HepG2 (cell line): ENCODE measurements at regions of chr18 and their contacts with region 1.

Region 1: GRCh38 chr18:1585879-1586488 is 681.3 kb downstream of the ADCYAP1 start:
- DNase-seq: peak; percentile 20
- ATAC-seq: peak; percentile 68
- H3K4me3 ChIP-seq: no peak overlapping the region
- H3K27ac ChIP-seq: no peak overlapping the region
- H3K4me1 ChIP-seq: no peaks in the 10 kb centered on the region
- H3K27me3 ChIP-seq: no peaks in the 10 kb centered on the region
- CTCF ChIP-seq: peak; percentile 61
- EP300 ChIP-seq: no peak
- POLR2A ChIP-seq: no peak
- RAD21 ChIP-seq: no peak

Region 2: GRCh38 chr18:1526991-1527390 is 59.0 kb before region 1 on chr18:
- CTCF ChIA-PET with region 1: no interaction called
- POLR2A ChIA-PET with region 1: no interaction called
- in situ Hi-C with region 1: no loop called
- intact Hi-C with region 1: no loop called
- DNase-seq: no peak
- ATAC-seq: no peak
- H3K4me3 ChIP-seq: no peak overlapping the region
- H3K27ac ChIP-seq: no peak overlapping the region
- H3K4me1 ChIP-seq: no peaks in the 10 kb centered on the region
- H3K27me3 ChIP-seq: no peaks in the 10 kb centered on the region
- CTCF ChIP-seq: no peak
- EP300 ChIP-seq: no peak
- POLR2A ChIP-seq: no peak
- RAD21 ChIP-seq: no peak

Region 3: DNA sequence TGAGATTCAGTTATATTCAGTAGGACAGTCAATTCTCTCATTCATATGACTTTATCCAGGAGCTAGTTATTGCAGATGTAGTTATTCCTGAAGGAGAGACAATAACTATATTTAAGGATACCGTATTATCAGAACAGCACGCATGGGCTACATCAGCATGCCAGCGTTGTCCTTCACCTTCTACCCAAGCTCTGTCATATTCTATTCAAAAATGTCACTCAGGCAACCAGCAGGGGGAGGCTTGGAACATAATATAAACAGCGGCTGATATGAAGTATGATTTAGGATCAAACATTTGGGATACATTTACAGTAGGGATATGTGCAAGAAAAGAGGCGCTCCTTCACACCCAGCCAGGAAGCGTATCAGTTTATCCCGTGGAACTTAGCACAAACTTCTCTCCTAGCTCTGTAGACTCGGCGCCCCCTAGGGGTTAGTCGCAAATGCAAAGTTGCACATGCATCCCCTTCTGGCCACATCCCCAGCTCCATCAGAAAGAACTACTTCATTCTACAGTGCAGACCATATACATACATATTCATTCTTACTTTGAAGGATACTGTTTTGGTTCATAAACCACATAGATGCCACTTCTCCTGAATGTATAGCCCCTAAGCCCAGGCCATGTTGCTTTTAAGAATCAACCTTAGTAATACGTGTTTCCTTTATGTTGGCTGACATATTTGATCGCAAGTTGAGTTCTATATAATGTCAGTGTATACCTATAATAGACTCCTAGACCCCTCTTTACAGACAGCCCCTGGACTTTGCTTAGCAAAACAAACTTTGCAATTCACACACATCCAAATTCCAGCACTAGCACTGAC is 78.1 kb after region 1 on chr18:
- CTCF ChIA-PET with region 1: interaction called, 5 read pairs
- POLR2A ChIA-PET with region 1: no interaction called
- in situ Hi-C with region 1: no loop called
- intact Hi-C with region 1: loop called (anchors 1 kb)
- DNase-seq: peak; percentile 44
- ATAC-seq: peak; percentile 92
- H3K4me3 ChIP-seq: no peak overlapping the region
- H3K27ac ChIP-seq: no peak overlapping the region
- H3K4me1 ChIP-seq: no peaks in the 10 kb centered on the region
- H3K27me3 ChIP-seq: no peaks in the 10 kb centered on the region
- CTCF ChIP-seq: peak; percentile 69
- EP300 ChIP-seq: no peak
- POLR2A ChIP-seq: no peak
- RAD21 ChIP-seq: no peak

Region 4: GRCh38 chr18:2223849-2224248 is 637.9 kb after region 1 on chr18:
- CTCF ChIA-PET with region 1: interaction called, 7 read pairs
- POLR2A ChIA-PET with region 1: no interaction called
- in situ Hi-C with region 1: no loop called
- intact Hi-C with region 1: loop called (anchors 1 kb)
- DNase-seq: peak; percentile 11
- ATAC-seq: peak; percentile 52
- H3K4me3 ChIP-seq: no peak overlapping the region
- H3K27ac ChIP-seq: no peak overlapping the region
- H3K4me1 ChIP-seq: no peaks in the 10 kb centered on the region
- H3K27me3 ChIP-seq: no peaks in the 10 kb centered on the region; a peak in 1 of 5 replicates
- CTCF ChIP-seq: peak; percentile 54
- EP300 ChIP-seq: no peak
- POLR2A ChIP-seq: no peak
- RAD21 ChIP-seq: no peak

Region 5: GRCh38 chr18:2536493-2536892 is 950.5 kb after region 1 on chr18:
- CTCF ChIA-PET with region 1: no interaction called
- POLR2A ChIA-PET with region 1: no interaction called
- in situ Hi-C with region 1: loop called (anchors 25 kb)
- intact Hi-C with region 1: loop called (anchors 2 kb)
- DNase-seq: no peak
- ATAC-seq: no peak
- H3K4me3 ChIP-seq: no peak overlapping the region
- H3K27ac ChIP-seq: no peak overlapping the region
- H3K4me1 ChIP-seq: no peaks in the 10 kb centered on the region
- H3K27me3 ChIP-seq: no peaks in the 10 kb centered on the region
- CTCF ChIP-seq: no peak
- EP300 ChIP-seq: no peak
- POLR2A ChIP-seq: no peak
- RAD21 ChIP-seq: no peak

Region 6: GRCh38 chr18:2547477-2548087 is 961.6 kb after region 1 on chr18:
- CTCF ChIA-PET with region 1: no interaction called
- POLR2A ChIA-PET with region 1: no interaction called
- in situ Hi-C with region 1: loop called (anchors 25 kb)
- intact Hi-C with region 1: no loop called
- DNase-seq: peak; percentile 20
- ATAC-seq: peak; percentile 48; the same call in 2 of the 3 replicates
- H3K4me3 ChIP-seq: no peak overlapping the region
- H3K27ac ChIP-seq: no peak overlapping the region
- H3K4me1 ChIP-seq: no peaks in the 10 kb centered on the region
- H3K27me3 ChIP-seq: no peaks in the 10 kb centered on the region
- CTCF ChIP-seq: peak; percentile 47
- EP300 ChIP-seq: no peak
- POLR2A ChIP-seq: no peak
- RAD21 ChIP-seq: no peak